ENCODE measurements at regions of chr14 and their contacts with region 1.

Region 1: GRCh38 chr14:80954687-80955299 is 628 bp upstream of the TSHR start:
- DNase-seq: peak; percentile 49 to 73 (median 58)
- ATAC-seq: peak; percentile 97
- H3K4me3 ChIP-seq: peak overlapping the region; percentile 51
- H3K27ac ChIP-seq: no peak overlapping the region
- H3K4me1 ChIP-seq: peaks cover 0 to 9% of the 10 kb centered on the region in 2 experiments; a peak in 3 of 5 replicates
- H3K27me3 ChIP-seq: peaks cover 0 to 5% of the 10 kb centered on the region in 2 experiments; a peak in 1 of 5 replicates
- CTCF ChIP-seq: peak; percentile 75 to 76 (median 75)
- EP300 ChIP-seq: no peak
- POLR2A ChIP-seq: no peak
- RAD21 ChIP-seq: peak; percentile 78 to 79

Region 2: GRCh38 chr14:80987235-80988032 is 32.6 kb after region 1 on chr14:
- CTCF ChIA-PET with region 1: interaction called, 11 read pairs
- POLR2A ChIA-PET with region 1: interaction called, 3 read pairs
- in situ Hi-C with region 1: no loop called
- intact Hi-C with region 1: loop called (anchors 1 kb)
- DNase-seq: peak; percentile 47 to 66 (median 56)
- ATAC-seq: peak; percentile 82
- H3K4me3 ChIP-seq: no peak overlapping the region
- H3K27ac ChIP-seq: no peak overlapping the region
- H3K4me1 ChIP-seq: no peaks in the 10 kb centered on the region
- H3K27me3 ChIP-seq: no peaks in the 10 kb centered on the region; a peak in 1 of 5 replicates
- CTCF ChIP-seq: peak; percentile 51 to 76 (median 72); a peak in 5 of 6 replicates
- EP300 ChIP-seq: no peak
- POLR2A ChIP-seq: no peak
- RAD21 ChIP-seq: peak; percentile 59 to 73

Region 3: GRCh38 chr14:81062816-81063215 is 108.0 kb after region 1 on chr14:
- CTCF ChIA-PET with region 1: no interaction called
- POLR2A ChIA-PET with region 1: no interaction called
- in situ Hi-C with region 1: loop called (anchors 5 kb)
- intact Hi-C with region 1: loop called (anchors 2 kb)
- DNase-seq: peak; percentile 5 to 38 (median 19)
- ATAC-seq: peak; percentile 90
- H3K4me3 ChIP-seq: no peak overlapping the region
- H3K27ac ChIP-seq: no peak overlapping the region
- H3K4me1 ChIP-seq: no peaks in the 10 kb centered on the region
- H3K27me3 ChIP-seq: no peaks in the 10 kb centered on the region; a peak in 1 of 5 replicates
- CTCF ChIP-seq: peak; percentile 46 to 60 (median 57)
- EP300 ChIP-seq: no peak
- POLR2A ChIP-seq: no peak
- RAD21 ChIP-seq: peak; percentile 55 to 73

Region 4: DNA sequence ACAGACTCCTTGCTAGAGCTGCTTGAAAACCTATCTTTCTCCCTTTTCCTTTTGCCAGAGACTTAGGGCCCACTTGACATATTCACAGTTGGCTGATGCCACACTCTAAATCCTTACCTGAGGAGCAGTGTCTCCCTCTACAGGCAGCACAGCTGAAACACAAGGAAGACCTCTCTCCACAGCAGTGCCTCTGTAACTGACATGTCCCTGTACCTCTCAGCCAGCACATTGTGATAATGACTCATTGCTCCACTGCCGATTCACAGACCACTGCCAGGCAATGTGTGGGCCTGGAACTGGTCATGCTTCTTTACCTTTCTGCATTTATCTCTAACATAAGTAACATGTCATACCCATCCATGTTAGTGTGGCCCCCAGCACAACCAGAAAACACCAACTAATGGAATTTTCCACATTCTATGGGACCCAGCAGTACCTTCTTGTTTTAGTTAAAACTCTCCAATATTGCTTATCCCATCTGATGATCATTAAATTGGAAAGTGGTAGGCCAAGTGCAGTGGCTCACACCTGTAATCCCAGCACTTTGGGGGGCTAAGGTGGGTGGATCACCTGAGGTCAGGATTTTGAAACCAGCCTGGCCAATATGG is 209.5 kb after region 1 on chr14:
- CTCF ChIA-PET with region 1: no interaction called
- POLR2A ChIA-PET with region 1: no interaction called
- in situ Hi-C with region 1: no loop called
- intact Hi-C with region 1: loop called (anchors 1 kb)
- DNase-seq: peak; percentile 33 to 82 (median 49)
- ATAC-seq: peak; percentile 96
- H3K4me3 ChIP-seq: no peak overlapping the region
- H3K27ac ChIP-seq: peak overlapping the region; percentile 23; the same call in 2 of the 3 replicates
- H3K4me1 ChIP-seq: peaks cover 0 to 22% of the 10 kb centered on the region in 2 experiments; a peak in 3 of 5 replicates
- H3K27me3 ChIP-seq: no peaks in the 10 kb centered on the region
- CTCF ChIP-seq: peak; percentile 72 to 75 (median 75)
- EP300 ChIP-seq: no peak
- POLR2A ChIP-seq: no peak
- RAD21 ChIP-seq: peak; percentile 58 to 79

Region 5: GRCh38 chr14:81269100-81269978 is 314.5 kb after region 1 on chr14:
- CTCF ChIA-PET with region 1: no interaction called
- POLR2A ChIA-PET with region 1: no interaction called
- in situ Hi-C with region 1: no loop called
- intact Hi-C with region 1: loop called (anchors 10 kb)
- DNase-seq: peak; percentile 61 to 62 (median 61)
- ATAC-seq: peak; percentile 89
- H3K4me3 ChIP-seq: no peak overlapping the region
- H3K27ac ChIP-seq: no peak overlapping the region
- H3K4me1 ChIP-seq: peaks cover 4 to 16% of the 10 kb centered on the region in 2 experiments; a peak in 3 of 5 replicates
- H3K27me3 ChIP-seq: no peaks in the 10 kb centered on the region
- CTCF ChIP-seq: peak; percentile 49 to 79 (median 60); a peak in 4 of 6 replicates
- EP300 ChIP-seq: no peak
- POLR2A ChIP-seq: no peak
- RAD21 ChIP-seq: peak; percentile 67 to 77

Region 6: GRCh38 chr14:81464247-81465002 is 509.6 kb after region 1 on chr14:
- CTCF ChIA-PET with region 1: no interaction called
- POLR2A ChIA-PET with region 1: no interaction called
- in situ Hi-C with region 1: no loop called
- intact Hi-C with region 1: loop called (anchors 2 kb)
- DNase-seq: peak; percentile 41 to 74 (median 48)
- ATAC-seq: peak; percentile 77
- H3K4me3 ChIP-seq: peak overlapping the region; percentile 29
- H3K27ac ChIP-seq: peak overlapping the region; percentile 72; the same call in 2 of the 3 replicates
- H3K4me1 ChIP-seq: no peaks in the 10 kb centered on the region
- H3K27me3 ChIP-seq: no peaks in the 10 kb centered on the region; a peak in 1 of 5 replicates
- CTCF ChIP-seq: peak; percentile 69 to 86 (median 78)
- EP300 ChIP-seq: no peak
- POLR2A ChIP-seq: no peak
- RAD21 ChIP-seq: peak; percentile 83 to 87